AG04450 (cell line): ENCODE measurements at regions of chr9 and their contacts with region 1.

Region 1: GRCh38 chr9:19464764-19465585 is 56.2 kb downstream of the ACER2 start:
- DNase-seq: peak; percentile 61
- H3K4me3 ChIP-seq: peak overlapping the region; percentile 49
- H3K27ac ChIP-seq: no peak overlapping the region
- H3K27me3 ChIP-seq: peaks cover 4% of the 10 kb centered on the region
- CTCF ChIP-seq: peak; percentile 60

Region 2: DNA sequence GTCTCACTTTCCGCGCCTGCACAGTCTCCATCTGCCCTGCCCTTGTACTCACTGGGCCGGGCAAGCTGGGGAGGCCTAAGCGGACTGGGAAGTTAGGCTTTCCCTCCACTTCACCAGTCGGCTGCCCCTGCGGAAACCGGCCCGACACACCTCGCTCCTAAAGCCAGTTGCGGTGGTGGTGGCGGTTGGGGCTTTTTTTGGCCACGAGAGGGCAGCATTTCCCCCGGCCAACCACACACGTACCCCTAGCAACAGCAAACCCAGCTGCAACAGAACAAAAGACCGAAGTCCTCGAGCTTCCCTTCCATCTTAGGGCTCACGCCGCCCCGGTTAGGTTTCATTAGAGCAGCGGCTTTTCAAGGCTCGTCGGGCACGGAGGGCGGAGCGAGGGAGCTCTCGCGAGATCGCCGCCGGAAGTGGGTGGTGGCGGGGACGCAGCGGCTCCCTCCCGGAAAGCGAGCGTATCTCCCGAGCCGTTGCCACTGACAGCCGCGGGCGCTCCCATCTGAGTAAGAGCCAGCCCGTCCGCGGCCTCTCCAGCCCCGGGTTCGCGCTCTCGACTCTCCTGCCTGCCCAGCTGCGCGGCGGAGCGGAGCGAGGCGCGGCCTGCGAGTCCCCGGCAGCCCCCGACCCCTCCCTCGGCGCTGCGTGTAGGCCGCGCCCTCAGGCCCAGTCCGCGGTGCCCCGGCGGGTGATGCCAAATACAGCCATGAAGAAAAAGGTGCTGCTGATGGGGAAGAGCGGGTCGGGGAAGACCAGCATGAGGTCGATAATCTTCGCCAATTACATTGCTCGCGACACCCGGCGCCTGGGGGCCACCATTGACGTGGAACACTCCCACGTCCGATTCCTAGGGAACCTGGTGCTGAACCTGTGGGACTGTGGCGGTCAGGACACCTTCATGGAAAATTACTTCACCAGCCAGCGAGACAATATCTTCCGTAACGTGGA is 415.7 kb before region 1 on chr9 and contains the start of gene RRAGA:
- CTCF ChIA-PET with region 1: interaction called, 11 read pairs
- POLR2A ChIA-PET with region 1: interaction called, 3 read pairs
- DNase-seq: peak; percentile 94
- H3K4me3 ChIP-seq: peak within 1 kb of the TSS; percentile 88
- H3K27ac ChIP-seq: peak within 1 kb of the TSS; percentile 94
- H3K27me3 ChIP-seq: no peaks in the 10 kb centered on the region
- CTCF ChIP-seq: peak; percentile 85
- polyA plus RNA-seq, gene RRAGA: 180 and 186 TPM in 2 replicates

Region 3: GRCh38 chr9:19386502-19387044 is 78.4 kb before region 1 on chr9:
- CTCF ChIA-PET with region 1: interaction called, 16 read pairs
- POLR2A ChIA-PET with region 1: no interaction called
- DNase-seq: no peak
- H3K4me3 ChIP-seq: no peak overlapping the region
- H3K27ac ChIP-seq: no peak overlapping the region
- H3K27me3 ChIP-seq: no peaks in the 10 kb centered on the region
- CTCF ChIP-seq: no peak

Region 4: DNA sequence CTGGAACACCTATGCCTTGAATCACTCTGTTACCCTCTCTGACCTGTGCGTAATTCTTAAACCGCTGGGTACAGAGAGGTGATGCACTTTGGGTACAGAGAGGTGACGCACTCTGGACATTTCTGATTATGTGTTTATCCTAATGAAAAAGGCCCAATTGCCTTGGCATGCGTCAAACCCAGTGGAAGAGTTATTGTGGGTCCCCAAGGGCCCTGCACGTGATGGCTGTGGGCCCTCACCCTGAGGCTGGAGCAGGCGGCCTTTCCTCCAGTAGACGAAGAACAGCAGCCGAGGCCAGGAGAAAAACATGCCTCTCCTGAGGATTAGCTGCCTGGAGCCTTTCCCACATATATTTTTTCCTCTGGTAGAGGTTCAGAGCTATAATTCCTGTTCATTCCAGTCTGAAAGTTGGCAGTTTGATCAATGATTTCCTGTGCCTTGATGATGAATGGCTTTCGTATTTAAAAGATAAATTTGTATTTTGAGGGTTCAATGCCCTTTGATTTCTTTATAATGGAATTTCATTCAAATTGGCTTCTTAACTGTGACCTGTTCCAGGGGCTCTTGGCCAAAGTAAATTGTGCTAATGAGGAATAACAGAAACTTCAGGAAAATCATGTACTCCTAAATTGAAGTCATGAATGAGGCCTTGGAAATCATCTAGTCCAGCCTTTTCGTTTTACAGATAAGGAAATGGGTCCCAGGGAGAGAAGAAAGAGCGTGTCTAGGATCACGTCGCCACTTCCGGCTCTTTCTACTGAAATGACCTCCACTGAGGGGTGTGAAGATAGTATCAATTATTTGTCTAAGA is 33.4 kb before region 1 on chr9:
- CTCF ChIA-PET with region 1: interaction called, 15 read pairs
- POLR2A ChIA-PET with region 1: no interaction called
- DNase-seq: no peak
- H3K4me3 ChIP-seq: no peak overlapping the region
- H3K27ac ChIP-seq: no peak overlapping the region
- H3K27me3 ChIP-seq: no peaks in the 10 kb centered on the region
- CTCF ChIP-seq: no peak

Region 5: DNA sequence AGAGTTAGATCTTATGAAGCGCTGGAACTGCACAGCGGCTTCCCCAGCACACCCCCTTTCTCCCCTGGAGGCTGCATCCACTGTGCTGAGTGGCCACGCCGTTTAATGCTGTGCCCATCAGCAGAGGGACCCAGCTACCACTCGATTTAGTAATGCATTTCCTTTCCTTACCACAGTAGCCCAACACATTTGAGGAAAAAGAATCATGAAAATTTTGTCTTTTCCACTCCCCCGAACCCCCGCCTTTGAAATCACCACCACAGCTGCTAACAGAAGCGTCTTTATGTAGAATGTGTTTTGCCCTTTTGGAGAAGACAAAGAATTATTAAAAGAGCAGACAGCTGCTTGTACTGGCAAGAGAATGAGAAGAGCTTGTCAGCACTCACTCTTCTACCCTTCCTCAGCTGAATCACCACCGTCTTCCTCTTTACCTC is 17.0 kb after region 1 on chr9:
- CTCF ChIA-PET with region 1: interaction called, 29 read pairs
- POLR2A ChIA-PET with region 1: no interaction called
- DNase-seq: no peak
- H3K4me3 ChIP-seq: no peak overlapping the region
- H3K27ac ChIP-seq: no peak overlapping the region
- H3K27me3 ChIP-seq: peaks cover 24% of the 10 kb centered on the region
- CTCF ChIP-seq: no peak

Region 6: GRCh38 chr9:19517202-19517942 is 52.4 kb after region 1 on chr9:
- CTCF ChIA-PET with region 1: no interaction called
- POLR2A ChIA-PET with region 1: no interaction called
- DNase-seq: no peak
- H3K4me3 ChIP-seq: no peak overlapping the region
- H3K27ac ChIP-seq: no peak overlapping the region
- H3K27me3 ChIP-seq: no peaks in the 10 kb centered on the region
- CTCF ChIP-seq: peak; percentile 25; the same call in 1 of the 2 replicates